Naive thymus-derived CD8-positive, alpha-beta T cell (primary cell): ENCODE measurements at regions of chr15 and their contacts with region 1.

Region 1: DNA sequence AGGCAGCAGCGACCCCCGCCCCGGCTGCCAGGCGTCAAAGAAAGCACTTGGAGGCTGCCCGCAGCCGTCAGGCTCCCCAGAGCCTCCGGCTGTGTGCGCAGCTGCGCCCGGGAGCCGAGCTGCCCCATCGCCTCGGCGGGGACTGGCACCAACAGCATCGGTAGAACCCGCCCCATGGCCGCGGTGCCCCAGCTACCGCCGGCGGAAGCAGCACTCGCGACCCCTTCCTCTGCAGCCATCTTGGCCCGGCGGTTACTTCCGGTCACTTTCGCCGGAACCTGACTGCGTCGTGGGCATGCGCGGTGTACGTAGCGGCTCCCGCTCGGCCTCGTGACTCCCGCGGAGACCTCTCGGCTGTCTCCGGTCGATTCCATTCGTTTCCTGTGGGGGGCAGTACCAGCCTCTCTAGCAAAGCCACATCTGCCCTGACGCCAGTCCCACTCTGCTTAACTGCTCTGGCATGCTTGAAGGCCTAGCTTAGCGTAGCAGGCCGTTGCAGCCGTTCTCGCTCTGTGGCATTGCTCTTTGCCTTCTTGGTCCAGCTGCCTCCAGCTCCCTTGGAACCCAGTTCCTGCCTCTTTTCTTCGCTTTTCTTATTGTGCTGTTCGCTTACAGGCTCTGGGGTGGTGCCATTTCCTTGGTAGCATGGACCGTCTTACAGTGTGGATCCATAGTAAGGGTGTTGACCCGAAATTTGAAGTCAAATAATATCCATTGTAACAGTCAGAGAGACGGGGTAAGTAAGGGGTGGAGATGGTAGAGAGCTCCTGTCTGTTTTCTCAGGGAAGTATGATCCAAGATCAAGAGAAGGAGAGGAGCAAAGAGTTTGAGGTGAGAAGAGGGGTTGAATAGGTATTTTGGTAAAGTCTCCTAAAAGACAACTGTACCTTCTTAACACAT is at the start of gene SPG11:
- DNase-seq: peak; percentile 84 to 99 (median 94)
- ATAC-seq: peak; percentile 76 to 79
- H3K4me3 Mint-ChIP-seq: peak within 1 kb of the TSS; percentile 92 to 99 (median 98)
- H3K27ac Mint-ChIP-seq: peak within 1 kb of the TSS; percentile 95 to 100 (median 100)
- H3K4me1 Mint-ChIP-seq: peaks cover 30 to 81% (median 67%) of the 10 kb centered on the region in 4 donors
- H3K27me3 Mint-ChIP-seq: no peaks in the 10 kb centered on the region
- polyA plus RNA-seq, gene SPG11: 24.3 to 30.9 (median 29.8) TPM

Region 2: GRCh38 chr15:44458429-44458828 is 205.2 kb before region 1 on chr15:
- POLR2A ChIA-PET with region 1: no interaction called
- DNase-seq: no peak
- ATAC-seq: no peak
- H3K4me3 Mint-ChIP-seq: no peak overlapping the region
- H3K27ac Mint-ChIP-seq: peak overlapping the region in 4 of 10 donors; percentile 11 to 68 (median 42)
- H3K4me1 Mint-ChIP-seq: peaks cover 19 to 47% (median 38%) of the 10 kb centered on the region in 4 donors
- H3K27me3 Mint-ChIP-seq: no peaks in the 10 kb centered on the region

Region 3: GRCh38 chr15:44536962-44537734 is 126.5 kb before region 1 on chr15 and contains the start of gene EIF3J:
- POLR2A ChIA-PET with region 1: interaction called, 12 read pairs
- DNase-seq: peak; percentile 90 to 96 (median 93)
- ATAC-seq: peak; percentile 90 to 91
- H3K4me3 Mint-ChIP-seq: peak within 1 kb of the TSS; percentile 87 to 97 (median 94)
- H3K27ac Mint-ChIP-seq: peak within 1 kb of the TSS; percentile 86 to 98 (median 96)
- H3K4me1 Mint-ChIP-seq: peaks cover 22 to 68% (median 55%) of the 10 kb centered on the region in 4 donors
- H3K27me3 Mint-ChIP-seq: no peaks in the 10 kb centered on the region
- polyA plus RNA-seq, gene EIF3J: 15.3 to 18.4 (median 16.2) TPM

Region 4: DNA sequence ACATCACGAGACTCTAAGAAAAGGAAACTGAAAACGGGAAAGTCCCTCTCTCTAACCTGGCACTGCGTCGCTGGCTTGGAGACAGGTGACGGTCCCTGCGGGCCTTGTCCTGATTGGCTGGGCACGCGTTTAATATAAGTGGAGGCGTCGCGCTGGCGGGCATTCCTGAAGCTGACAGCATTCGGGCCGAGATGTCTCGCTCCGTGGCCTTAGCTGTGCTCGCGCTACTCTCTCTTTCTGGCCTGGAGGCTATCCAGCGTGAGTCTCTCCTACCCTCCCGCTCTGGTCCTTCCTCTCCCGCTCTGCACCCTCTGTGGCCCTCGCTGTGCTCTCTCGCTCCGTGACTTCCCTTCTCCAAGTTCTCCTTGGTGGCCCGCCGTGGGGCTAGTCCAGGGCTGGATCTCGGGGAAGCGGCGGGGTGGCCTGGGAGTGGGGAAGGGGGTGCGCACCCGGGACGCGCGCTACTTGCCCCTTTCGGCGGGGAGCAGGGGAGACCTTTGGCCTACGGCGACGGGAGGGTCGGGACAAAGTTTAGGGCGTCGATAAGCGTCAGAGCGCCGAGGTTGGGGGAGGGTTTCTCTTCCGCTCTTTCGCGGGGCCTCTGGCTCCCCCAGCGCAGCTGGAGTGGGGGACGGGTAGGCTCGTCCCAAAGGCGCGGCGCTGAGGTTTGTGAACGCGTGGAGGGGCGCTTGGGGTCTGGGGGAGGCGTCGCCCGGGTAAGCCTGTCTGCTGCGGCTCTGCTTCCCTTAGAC is 47.9 kb after region 1 on chr15 and contains the start of gene B2M:
- POLR2A ChIA-PET with region 1: interaction called, 1,569 read pairs
- DNase-seq: peak; percentile 87 to 99 (median 96)
- ATAC-seq: peak; percentile 70 to 81
- H3K4me3 Mint-ChIP-seq: peak within 1 kb of the TSS; percentile 88 to 100 (median 98)
- H3K27ac Mint-ChIP-seq: peak within 1 kb of the TSS; percentile 100
- H3K4me1 Mint-ChIP-seq: peaks cover 33 to 69% (median 54%) of the 10 kb centered on the region in 4 donors
- H3K27me3 Mint-ChIP-seq: peaks cover 0 to 4% (median 0%) of the 10 kb centered on the region in 5 donors
- polyA plus RNA-seq, gene B2M: 25,152 to 39,550 (median 31,716) TPM

Region 5: GRCh38 chr15:44728576-44729407 is 65.1 kb after region 1 on chr15:
- POLR2A ChIA-PET with region 1: interaction called, 618 read pairs
- DNase-seq: peak; percentile 80 to 97 (median 96)
- ATAC-seq: peak; percentile 78 to 85
- H3K4me3 Mint-ChIP-seq: peak overlapping the region; percentile 97 to 100 (median 99)
- H3K27ac Mint-ChIP-seq: peak overlapping the region; percentile 98 to 100 (median 99)
- H3K4me1 Mint-ChIP-seq: peaks cover 29 to 83% (median 72%) of the 10 kb centered on the region in 4 donors
- H3K27me3 Mint-ChIP-seq: no peaks in the 10 kb centered on the region